ENCODE measurements at regions of chr20 and their contacts with region 1.

Region 1: GRCh38 chr20:9626357-9626756 is 112.0 kb downstream of the LAMP5 start:
- DNase-seq: no peak
- ATAC-seq: no peak

Region 2: GRCh38 chr20:10079964-10080363 is 453.6 kb after region 1 on chr20:
- intact Hi-C with region 1: loop called in 1 of 2 experiments (anchors 10 kb)
- DNase-seq: no peak
- ATAC-seq: peak; percentile 38 to 78

Measured in left cardiac atrium (tissue), 4 donors.